ENCODE measurements at regions of chr2 and their contacts with region 1.

Region 1: GRCh38 chr2:137185378-137186078 is 420.2 kb downstream of the THSD7B start:
- DNase-seq: no peak
- H3K4me3 ChIP-seq: no peak overlapping the region
- H3K27ac ChIP-seq: no peak overlapping the region
- H3K4me1 ChIP-seq: no peaks in the 10 kb centered on the region
- H3K27me3 ChIP-seq: no peaks in the 10 kb centered on the region
- CTCF ChIP-seq: no peak
- POLR2A ChIP-seq: no peak

Region 2: DNA sequence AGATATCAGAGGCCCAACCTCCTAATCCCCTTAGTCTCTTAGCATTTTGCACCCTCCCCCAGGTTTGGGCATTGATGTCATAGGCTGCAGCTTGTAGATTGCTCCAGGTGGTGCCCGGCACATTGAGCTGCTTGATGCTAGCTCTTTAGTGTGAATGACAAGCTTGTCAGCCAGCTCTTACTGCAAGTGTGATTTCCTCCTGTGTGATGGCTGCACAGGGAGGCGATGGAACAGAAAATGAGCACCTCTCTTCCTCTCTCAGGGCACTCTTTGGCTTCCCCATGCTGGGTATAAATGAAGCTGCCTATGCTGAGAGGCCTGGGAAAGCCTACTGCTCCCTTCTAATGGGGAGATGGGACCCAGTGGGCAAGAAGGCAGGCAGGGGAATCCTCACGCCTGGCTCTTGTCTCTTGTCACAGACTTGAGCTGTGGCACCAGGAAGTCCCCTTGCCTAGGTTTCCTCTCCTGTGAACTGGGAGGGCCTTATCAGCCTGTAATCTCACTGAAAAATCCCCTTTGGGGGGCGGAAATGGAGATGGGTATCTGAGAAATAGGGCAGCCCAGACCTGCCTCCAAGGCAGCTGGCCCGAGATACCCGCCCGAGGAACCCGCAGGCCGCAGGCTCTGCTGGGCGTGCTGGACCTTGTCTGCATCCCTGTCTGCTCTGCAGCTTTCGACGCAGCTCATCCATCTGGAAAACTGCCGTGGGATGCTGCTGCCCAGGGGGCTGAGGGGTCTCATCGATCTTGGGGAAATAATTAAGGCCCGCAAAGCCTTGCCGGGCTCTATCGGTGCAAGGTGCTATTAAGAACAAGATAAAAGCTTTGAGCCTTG is 904.0 kb before region 1 on chr2:
- CTCF ChIA-PET with region 1: no interaction called
- POLR2A ChIA-PET with region 1: no interaction called
- dilution Hi-C with region 1: no loop called
- intact Hi-C with region 1: no loop called
- DNase-seq: no peak
- H3K4me3 ChIP-seq: no peak overlapping the region
- H3K27ac ChIP-seq: no peak overlapping the region
- H3K4me1 ChIP-seq: no peaks in the 10 kb centered on the region
- H3K27me3 ChIP-seq: peaks cover 6 to 20% of the 10 kb centered on the region in 2 experiments
- CTCF ChIP-seq: no peak
- POLR2A ChIP-seq: no peak

Region 3: DNA sequence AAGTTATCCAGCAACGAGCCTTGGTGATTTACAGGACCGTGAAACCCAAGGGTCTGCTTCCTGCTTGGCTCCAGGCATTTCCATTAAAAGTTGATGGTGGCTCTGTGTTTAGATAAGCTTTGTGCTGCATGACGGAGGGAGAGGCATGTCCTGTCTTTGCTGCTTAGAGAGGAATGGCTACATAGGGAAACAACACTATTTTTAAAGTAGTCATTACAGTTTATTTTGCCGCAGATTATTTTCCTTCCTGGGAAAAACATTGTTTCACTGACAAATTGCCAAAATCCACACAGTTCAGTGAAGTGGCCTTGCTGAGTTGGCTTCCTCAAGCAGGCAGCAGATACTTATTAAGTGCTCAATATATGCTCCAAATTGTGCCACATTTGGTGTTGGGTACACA is 321.7 kb before region 1 on chr2:
- CTCF ChIA-PET with region 1: no interaction called
- POLR2A ChIA-PET with region 1: no interaction called
- dilution Hi-C with region 1: no loop called
- intact Hi-C with region 1: loop called (anchors 10 kb)
- DNase-seq: peak; percentile 87
- H3K4me3 ChIP-seq: no peak overlapping the region
- H3K27ac ChIP-seq: peak overlapping the region; percentile 0
- H3K4me1 ChIP-seq: no peaks in the 10 kb centered on the region
- H3K27me3 ChIP-seq: no peaks in the 10 kb centered on the region
- CTCF ChIP-seq: no peak
- POLR2A ChIP-seq: no peak

Region 4: GRCh38 chr2:136997557-136997956 is 188.0 kb before region 1 on chr2:
- CTCF ChIA-PET with region 1: no interaction called
- POLR2A ChIA-PET with region 1: no interaction called
- dilution Hi-C with region 1: no loop called
- intact Hi-C with region 1: no loop called
- DNase-seq: peak; percentile 63
- H3K4me3 ChIP-seq: no peak overlapping the region
- H3K27ac ChIP-seq: peak overlapping the region; percentile 24
- H3K4me1 ChIP-seq: peaks cover 3% of the 10 kb centered on the region
- H3K27me3 ChIP-seq: no peaks in the 10 kb centered on the region
- CTCF ChIP-seq: no peak
- POLR2A ChIP-seq: no peak

Region 5: DNA sequence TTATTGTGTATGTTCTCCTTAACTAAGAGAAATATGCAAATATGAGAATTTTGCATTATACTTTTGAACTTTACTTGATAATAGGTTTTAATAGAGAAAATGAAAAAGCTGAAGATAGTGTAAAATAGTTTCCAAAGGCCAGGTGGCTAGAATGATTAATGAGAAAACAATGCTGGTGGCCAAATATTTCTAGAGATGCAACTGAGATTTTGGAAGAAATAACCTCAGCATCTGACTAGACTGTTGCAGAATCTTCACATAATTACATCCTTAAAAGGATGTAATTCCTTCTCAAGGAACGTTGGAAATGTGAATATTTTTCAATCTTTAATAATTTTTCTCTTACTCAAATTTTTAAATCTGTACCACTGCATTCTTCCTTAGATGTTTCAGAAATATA is 14.2 kb after region 1 on chr2:
- CTCF ChIA-PET with region 1: no interaction called
- POLR2A ChIA-PET with region 1: no interaction called
- dilution Hi-C with region 1: no loop called
- intact Hi-C with region 1: no loop called
- DNase-seq: no peak
- H3K4me3 ChIP-seq: no peak overlapping the region
- H3K27ac ChIP-seq: no peak overlapping the region
- H3K4me1 ChIP-seq: no peaks in the 10 kb centered on the region
- H3K27me3 ChIP-seq: no peaks in the 10 kb centered on the region
- CTCF ChIP-seq: no peak
- POLR2A ChIP-seq: no peak

Region 6: GRCh38 chr2:137411570-137411969 is 226.0 kb after region 1 on chr2:
- CTCF ChIA-PET with region 1: no interaction called
- POLR2A ChIA-PET with region 1: no interaction called
- dilution Hi-C with region 1: no loop called
- intact Hi-C with region 1: no loop called
- DNase-seq: no peak
- H3K4me3 ChIP-seq: no peak overlapping the region
- H3K27ac ChIP-seq: no peak overlapping the region
- H3K4me1 ChIP-seq: no peaks in the 10 kb centered on the region
- H3K27me3 ChIP-seq: no peaks in the 10 kb centered on the region
- CTCF ChIP-seq: no peak
- POLR2A ChIP-seq: no peak

Measured in endothelial cell of umbilical vein (primary cell).